ENCODE measurements at regions of chr20 and their contacts with region 1.

Region 1: DNA sequence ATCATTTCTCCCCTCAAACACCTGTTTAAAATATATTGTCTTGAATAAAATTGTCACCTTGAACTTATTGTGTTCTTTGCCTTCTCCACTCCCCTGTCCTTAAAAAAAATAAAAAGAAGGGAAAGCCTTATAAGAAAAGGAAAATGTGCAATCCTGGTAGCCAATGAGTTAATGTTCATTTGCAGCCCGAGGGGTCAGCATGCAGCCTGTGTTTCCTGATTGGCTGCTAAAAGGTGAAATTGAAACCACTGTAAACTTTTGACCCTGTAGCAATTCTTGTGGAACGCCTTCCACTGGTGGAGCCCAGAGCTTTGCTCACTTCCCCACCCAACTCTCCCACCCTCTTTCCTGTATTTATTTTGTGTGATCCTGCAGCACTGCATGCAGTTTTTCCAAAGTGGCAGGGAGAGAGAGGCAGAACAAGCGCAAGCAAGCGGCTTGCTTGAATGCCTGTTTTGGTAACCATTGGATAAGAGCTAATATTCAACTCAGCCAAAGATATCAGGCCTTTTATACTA is 74.9 kb downstream of the NCOA3 start:
- DNase-seq: peak in 4 of 5 donors; percentile 55 to 81 (median 70)
- ATAC-seq: peak; percentile 85 to 97 (median 94)
- H3K4me3 ChIP-seq: peak overlapping the region in 8 of 12 donors; percentile 6 to 44 (median 23)
- H3K27ac ChIP-seq: peak overlapping the region in 11 of 12 donors; percentile 39 to 78 (median 62)
- H3K4me1 ChIP-seq: peaks cover 18 to 88% (median 70%) of the 10 kb centered on the region in 12 donors
- H3K27me3 ChIP-seq: no peaks in the 10 kb centered on the region
- CTCF ChIP-seq: peak in 2 of 12 donors; percentile 19 to 22
- POLR2A ChIP-seq: peak in 1 of 2 donors; percentile 22

Region 2: DNA sequence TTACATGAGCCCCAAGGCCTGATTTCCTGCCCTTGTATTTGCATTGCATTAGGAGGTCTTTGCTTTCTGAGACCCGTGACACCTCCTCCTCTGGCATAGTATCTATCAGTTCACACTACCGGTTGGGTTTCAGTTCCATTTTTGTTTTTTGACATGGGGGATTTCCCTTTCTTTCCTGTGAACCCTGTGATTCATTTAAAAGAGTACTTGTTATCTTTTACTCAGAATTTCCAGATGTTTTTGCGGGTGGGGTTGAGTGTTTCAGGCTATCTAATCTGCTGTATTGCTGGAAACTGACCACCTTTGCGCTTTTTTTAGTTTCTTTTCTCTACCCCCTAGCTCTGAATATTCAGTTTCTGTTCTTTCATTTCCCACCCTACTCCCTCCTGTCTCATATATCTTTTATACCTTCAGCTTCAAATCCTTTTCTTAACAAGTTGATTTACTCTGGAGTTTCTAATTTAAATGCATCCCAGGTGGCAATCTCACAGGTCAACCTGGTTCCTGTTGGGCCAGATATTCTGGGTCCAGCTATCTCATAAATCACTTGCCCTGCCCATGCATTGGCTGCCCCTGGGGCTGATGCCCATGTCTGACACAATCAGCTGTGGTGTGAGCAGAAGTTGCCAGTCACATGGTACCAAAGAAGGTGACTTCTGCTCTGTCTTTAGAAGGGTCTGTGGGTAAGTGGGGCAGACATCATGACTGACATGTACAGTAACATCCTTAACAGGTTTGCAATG is 89.2 kb before region 1 on chr20:
- intact Hi-C with region 1: loop called in 1 of 10 experiments (anchors 5 kb)
- DNase-seq: no peak
- ATAC-seq: peak in 3 of 4 donors; percentile 53 to 68 (median 53)
- H3K4me3 ChIP-seq: no peak overlapping the region
- H3K27ac ChIP-seq: peak overlapping the region in 7 of 12 donors; percentile 4 to 77 (median 41)
- H3K4me1 ChIP-seq: peaks cover 0 to 49% (median 8%) of the 10 kb centered on the region in 12 donors
- H3K27me3 ChIP-seq: no peaks in the 10 kb centered on the region
- CTCF ChIP-seq: no peak
- POLR2A ChIP-seq: no peak

Region 3: GRCh38 chr20:47557791-47558680 is 18.5 kb before region 1 on chr20:
- intact Hi-C with region 1: loop called in 1 of 10 experiments (anchors 2 kb)
- DNase-seq: no peak
- ATAC-seq: peak in 2 of 4 donors; percentile 36 to 57
- H3K4me3 ChIP-seq: no peak overlapping the region
- H3K27ac ChIP-seq: peak overlapping the region in 9 of 12 donors; percentile 0 to 68 (median 20)
- H3K4me1 ChIP-seq: peaks cover 11 to 68% (median 41%) of the 10 kb centered on the region in 12 donors
- H3K27me3 ChIP-seq: no peaks in the 10 kb centered on the region
- CTCF ChIP-seq: no peak
- POLR2A ChIP-seq: no peak

Region 4: GRCh38 chr20:47610247-47610944 is 33.8 kb after region 1 on chr20:
- intact Hi-C with region 1: loop called in 3 of 10 experiments (anchors 5 kb)
- DNase-seq: peak in 3 of 5 donors; percentile 34 to 71 (median 39)
- ATAC-seq: peak; percentile 76 to 91 (median 88)
- H3K4me3 ChIP-seq: no peak overlapping the region
- H3K27ac ChIP-seq: peak overlapping the region in 7 of 12 donors; percentile 1 to 74 (median 16)
- H3K4me1 ChIP-seq: peaks cover 0 to 70% (median 27%) of the 10 kb centered on the region in 12 donors
- H3K27me3 ChIP-seq: no peaks in the 10 kb centered on the region
- CTCF ChIP-seq: no peak
- POLR2A ChIP-seq: no peak

Region 5: GRCh38 chr20:47735412-47736400 is 159.1 kb after region 1 on chr20:
- intact Hi-C with region 1: no loop called
- DNase-seq: peak; percentile 27 to 70 (median 48)
- ATAC-seq: peak; percentile 42 to 85 (median 73)
- H3K4me3 ChIP-seq: no peak overlapping the region
- H3K27ac ChIP-seq: no peak overlapping the region
- H3K4me1 ChIP-seq: peaks cover 0 to 16% (median 0%) of the 10 kb centered on the region in 12 donors
- H3K27me3 ChIP-seq: no peaks in the 10 kb centered on the region
- CTCF ChIP-seq: no peak
- POLR2A ChIP-seq: no peak